ENCODE measurements at regions of chr17 and their contacts with region 1.

Region 1: GRCh38 chr17:31433091-31433790 is 41.8 kb downstream of the RAB11FIP4 start:
- DNase-seq: no peak
- ATAC-seq: no peak
- H3K4me3 ChIP-seq: no peak overlapping the region
- H3K27ac ChIP-seq: no peak overlapping the region
- H3K4me1 ChIP-seq: no peaks in the 10 kb centered on the region
- CTCF ChIP-seq: no peak
- EP300 ChIP-seq: no peak
- POLR2A ChIP-seq: no peak
- RAD21 ChIP-seq: no peak

Region 2: GRCh38 chr17:31216053-31216751 is 217.0 kb before region 1 on chr17:
- CTCF ChIA-PET with region 1: no interaction called
- POLR2A ChIA-PET with region 1: no interaction called
- DNase-seq: peak; percentile 23 to 62
- ATAC-seq: peak in 1 of 2 experiments; percentile 65; a peak in 2 of 6 replicates
- H3K4me3 ChIP-seq: no peak overlapping the region
- H3K27ac ChIP-seq: no peak overlapping the region
- H3K4me1 ChIP-seq: peaks cover 6% of the 10 kb centered on the region; the same call in 2 of the 3 replicates
- CTCF ChIP-seq: peak; percentile 86
- EP300 ChIP-seq: no peak
- POLR2A ChIP-seq: no peak
- RAD21 ChIP-seq: peak; percentile 81 to 88

Region 3: DNA sequence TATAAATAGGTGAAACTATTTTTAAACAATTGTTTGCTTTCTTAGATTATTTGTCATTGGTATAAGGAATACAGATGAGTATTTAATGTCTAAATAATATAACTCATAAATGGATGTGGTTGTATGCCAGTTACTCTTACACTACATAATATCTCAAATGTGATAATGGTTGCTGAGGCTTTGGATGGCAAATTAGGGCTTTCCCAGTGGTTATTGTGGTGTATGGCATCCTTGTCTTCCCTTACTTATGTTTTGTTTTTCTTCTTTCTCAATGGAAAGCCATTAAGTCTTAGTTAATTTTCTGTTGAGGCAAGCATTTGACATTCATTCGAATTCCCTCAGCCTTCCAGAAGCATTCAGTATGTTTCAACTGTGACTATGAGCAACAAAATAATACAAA is 146.7 kb before region 1 on chr17:
- CTCF ChIA-PET with region 1: no interaction called
- POLR2A ChIA-PET with region 1: no interaction called
- DNase-seq: no peak
- ATAC-seq: peak; percentile 64 to 66; a peak in 3 of 6 replicates
- H3K4me3 ChIP-seq: no peak overlapping the region
- H3K27ac ChIP-seq: no peak overlapping the region
- H3K4me1 ChIP-seq: 0 out of 3 replicates have a peak, but pooled peaks cover 3% of the 10 kb centered on the region
- CTCF ChIP-seq: no peak
- EP300 ChIP-seq: no peak
- POLR2A ChIP-seq: no peak
- RAD21 ChIP-seq: no peak

Region 4: GRCh38 chr17:31448467-31449077 is 15.3 kb after region 1 on chr17:
- CTCF ChIA-PET with region 1: interaction called, 65 read pairs
- POLR2A ChIA-PET with region 1: no interaction called
- DNase-seq: no peak
- ATAC-seq: no peak
- H3K4me3 ChIP-seq: no peak overlapping the region
- H3K27ac ChIP-seq: no peak overlapping the region
- H3K4me1 ChIP-seq: no peaks in the 10 kb centered on the region
- CTCF ChIP-seq: no peak
- EP300 ChIP-seq: no peak
- POLR2A ChIP-seq: no peak
- RAD21 ChIP-seq: no peak

Region 5: DNA sequence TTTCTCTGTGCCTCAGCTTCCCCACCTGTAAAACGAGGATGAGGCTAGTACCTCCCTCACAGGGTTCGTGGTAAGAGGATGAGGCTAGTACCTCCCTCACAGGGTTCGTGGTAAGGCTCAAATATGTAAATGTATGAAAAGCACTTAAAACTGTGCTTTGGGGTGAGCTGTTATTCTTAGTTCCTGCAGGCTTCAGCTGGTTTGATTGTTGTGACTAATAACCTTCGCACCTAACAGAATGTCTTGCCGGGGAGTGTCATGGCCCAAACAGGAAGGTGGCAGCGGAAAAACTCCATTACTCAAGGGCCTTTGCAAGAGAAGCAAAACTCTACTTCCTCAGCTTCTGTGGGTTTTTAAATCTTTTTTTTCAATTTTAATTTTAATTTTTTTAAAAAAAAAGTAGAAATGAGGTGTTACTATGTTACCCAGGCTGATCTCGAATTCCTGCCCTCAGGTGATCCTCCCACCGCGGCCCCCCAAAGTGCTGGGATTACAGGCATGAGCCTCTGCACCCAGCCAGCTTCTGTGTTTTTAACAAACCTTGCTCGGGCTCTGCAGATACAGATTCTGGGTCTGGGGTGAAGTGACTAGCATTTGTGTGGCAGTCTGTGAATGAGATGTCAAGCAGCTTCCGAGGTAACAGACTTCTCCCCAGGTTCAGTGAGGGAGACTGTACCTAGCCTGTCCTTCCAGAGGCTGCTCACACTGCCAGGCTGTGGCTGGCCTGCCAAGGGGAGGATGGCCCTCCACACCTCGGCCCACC is 61.2 kb after region 1 on chr17:
- CTCF ChIA-PET with region 1: interaction called, 16 read pairs
- POLR2A ChIA-PET with region 1: no interaction called
- DNase-seq: no peak
- ATAC-seq: no peak
- H3K4me3 ChIP-seq: no peak overlapping the region
- H3K27ac ChIP-seq: no peak overlapping the region
- H3K4me1 ChIP-seq: no peaks in the 10 kb centered on the region
- CTCF ChIP-seq: no peak
- EP300 ChIP-seq: no peak
- POLR2A ChIP-seq: no peak
- RAD21 ChIP-seq: no peak

Region 6: GRCh38 chr17:31533546-31534155 is 100.4 kb after region 1 on chr17:
- CTCF ChIA-PET with region 1: interaction called, 490 read pairs
- POLR2A ChIA-PET with region 1: no interaction called
- DNase-seq: peak; percentile 45 to 79
- ATAC-seq: peak; percentile 58 to 83
- H3K4me3 ChIP-seq: no peak overlapping the region
- H3K27ac ChIP-seq: peak overlapping the region in 1 of 2 experiments; percentile 29; a peak in 3 of 6 replicates
- H3K4me1 ChIP-seq: peaks cover 7% of the 10 kb centered on the region
- CTCF ChIP-seq: peak; percentile 39
- EP300 ChIP-seq: no peak
- POLR2A ChIP-seq: no peak
- RAD21 ChIP-seq: peak; percentile 56 to 63